Adrenal gland (tissue), 19 donors: ENCODE measurements at regions of chr15 and their contacts with region 1.

Region 1: GRCh38 chr15:77543159-77543882 is 89.4 kb downstream of the LINGO1 start:
- DNase-seq: peak; percentile 81 to 92 (median 87)
- H3K4me3 ChIP-seq: peak overlapping the region in 1 of 4 donors; percentile 47
- H3K27ac ChIP-seq: peak overlapping the region in 2 of 5 donors; percentile 37 to 57
- H3K4me1 ChIP-seq: peaks cover 10 to 12% of the 10 kb centered on the region in 2 donors
- H3K27me3 ChIP-seq: no peaks in the 10 kb centered on the region
- CTCF ChIP-seq: peak; percentile 94 to 99 (median 98)
- POLR2A ChIP-seq: no peak

Region 2: GRCh38 chr15:77024271-77025082 is 518.8 kb before region 1 on chr15:
- intact Hi-C with region 1: loop called (anchors 2 to 10 kb)
- DNase-seq: peak; percentile 56 to 80 (median 71)
- H3K4me3 ChIP-seq: no peak overlapping the region
- H3K27ac ChIP-seq: no peak overlapping the region
- H3K4me1 ChIP-seq: peaks cover 5 to 13% of the 10 kb centered on the region in 2 donors
- H3K27me3 ChIP-seq: no peaks in the 10 kb centered on the region
- CTCF ChIP-seq: peak; percentile 84 to 98 (median 91)
- POLR2A ChIP-seq: no peak

Region 3: DNA sequence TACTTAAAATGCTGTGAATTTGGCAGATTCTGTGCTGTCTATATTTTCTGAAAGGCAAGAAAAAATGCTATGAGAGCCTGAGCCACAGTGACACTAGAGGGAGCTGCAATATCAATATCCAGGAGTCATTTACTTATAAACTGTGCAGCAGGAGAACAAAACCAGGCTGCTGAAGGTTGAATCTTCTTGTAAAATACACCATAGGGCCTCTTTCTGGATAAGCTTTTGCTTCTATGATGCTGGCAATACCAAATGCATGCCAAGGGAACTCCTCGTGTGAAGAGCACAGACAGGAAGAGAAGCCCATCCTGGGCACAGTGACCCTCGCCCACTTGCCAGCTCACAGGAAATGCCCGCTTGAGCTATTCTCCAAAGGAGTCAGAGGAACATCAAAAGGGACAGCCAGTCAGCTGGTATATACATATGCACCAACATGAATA is 424.4 kb before region 1 on chr15:
- intact Hi-C with region 1: loop called (anchors 5 to 10 kb)
- DNase-seq: peak; percentile 33 to 82 (median 43)
- H3K4me3 ChIP-seq: no peak overlapping the region
- H3K27ac ChIP-seq: no peak overlapping the region
- H3K4me1 ChIP-seq: peaks cover 0 to 17% of the 10 kb centered on the region in 2 donors
- H3K27me3 ChIP-seq: no peaks in the 10 kb centered on the region
- CTCF ChIP-seq: peak; percentile 45 to 79 (median 76)
- POLR2A ChIP-seq: no peak

Region 4: DNA sequence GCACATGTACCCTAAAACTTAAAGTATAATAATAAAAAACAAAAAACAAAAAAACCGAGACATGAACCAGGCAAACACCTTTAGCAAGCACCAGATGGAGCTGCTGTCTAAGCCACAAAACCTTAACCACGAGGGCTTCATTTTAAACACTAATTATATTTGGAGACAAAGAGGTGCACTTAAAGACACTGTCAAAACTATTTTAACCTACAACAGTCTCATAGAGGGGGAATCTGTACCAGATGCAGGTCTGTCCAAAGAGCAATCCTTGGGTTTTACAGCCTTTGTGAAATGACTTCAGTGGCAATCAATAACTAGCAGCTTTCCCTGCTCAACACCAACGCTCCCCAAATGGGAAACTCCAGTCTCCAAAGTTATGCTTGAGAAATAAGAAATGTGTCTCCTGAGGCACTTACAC is 356.7 kb before region 1 on chr15:
- intact Hi-C with region 1: loop called in 1 of 2 experiments (anchors 5 kb)
- DNase-seq: peak in 1 of 7 donors; percentile 5
- H3K4me3 ChIP-seq: no peak overlapping the region
- H3K27ac ChIP-seq: peak overlapping the region in 2 of 5 donors; percentile 63 to 84
- H3K4me1 ChIP-seq: peaks cover 0 to 19% of the 10 kb centered on the region in 2 donors
- H3K27me3 ChIP-seq: no peaks in the 10 kb centered on the region
- CTCF ChIP-seq: peak; percentile 20 to 83 (median 58)
- POLR2A ChIP-seq: no peak

Region 5: GRCh38 chr15:77720655-77721054 is 177.3 kb after region 1 on chr15:
- intact Hi-C with region 1: no loop called
- DNase-seq: no peak
- H3K4me3 ChIP-seq: no peak overlapping the region
- H3K27ac ChIP-seq: no peak overlapping the region
- H3K4me1 ChIP-seq: no peaks in the 10 kb centered on the region
- H3K27me3 ChIP-seq: peaks cover 5% of the 10 kb centered on the region
- CTCF ChIP-seq: no peak
- POLR2A ChIP-seq: no peak

Region 6: GRCh38 chr15:78034495-78035191 is 491.3 kb after region 1 on chr15:
- intact Hi-C with region 1: no loop called
- DNase-seq: peak in 1 of 7 donors; percentile 27
- H3K4me3 ChIP-seq: no peak overlapping the region
- H3K27ac ChIP-seq: peak overlapping the region in 4 of 5 donors; percentile 6 to 66 (median 52)
- H3K4me1 ChIP-seq: peaks cover 18 to 78% of the 10 kb centered on the region in 2 donors
- H3K27me3 ChIP-seq: no peaks in the 10 kb centered on the region
- CTCF ChIP-seq: no peak
- POLR2A ChIP-seq: no peak